Panc1 (cell line): ENCODE measurements at regions of chr9 and their contacts with region 1.

Region 1: GRCh38 chr9:26597542-26598149 is 295.0 kb downstream of the CAAP1 start:
- DNase-seq: no peak
- ATAC-seq: no peak
- H3K4me3 ChIP-seq: no peak overlapping the region
- H3K27ac ChIP-seq: no peak overlapping the region
- H3K4me1 ChIP-seq: no peaks in the 10 kb centered on the region
- H3K27me3 ChIP-seq: no peaks in the 10 kb centered on the region
- CTCF ChIP-seq: no peak

Region 2: DNA sequence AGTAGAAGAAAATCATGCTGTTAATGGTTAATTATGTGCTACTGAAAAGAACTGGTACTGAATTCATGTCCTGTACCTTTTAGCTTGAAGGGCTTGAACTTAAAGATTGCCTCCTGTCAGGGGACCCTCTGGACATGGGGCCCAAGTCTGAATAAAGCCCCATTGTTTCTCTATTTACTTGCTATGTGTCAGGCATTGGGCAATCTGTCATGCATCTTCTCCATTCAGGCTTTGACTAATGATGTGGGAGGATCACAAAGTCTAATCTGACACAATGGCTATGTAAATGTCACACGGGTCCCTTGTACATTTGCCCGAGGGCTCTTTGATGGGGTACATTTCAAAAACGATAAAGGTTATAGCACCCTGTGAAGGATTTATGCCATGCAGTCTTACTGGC is 855.4 kb before region 1 on chr9:
- CTCF ChIA-PET with region 1: interaction called, 13 read pairs
- POLR2A ChIA-PET with region 1: no interaction called
- in situ Hi-C with region 1: no loop called
- intact Hi-C with region 1: no loop called
- DNase-seq: no peak
- ATAC-seq: no peak
- H3K4me3 ChIP-seq: no peak overlapping the region
- H3K27ac ChIP-seq: no peak overlapping the region
- H3K4me1 ChIP-seq: no peaks in the 10 kb centered on the region
- H3K27me3 ChIP-seq: no peaks in the 10 kb centered on the region
- CTCF ChIP-seq: no peak

Region 3: GRCh38 chr9:26789959-26790358 is 192.3 kb after region 1 on chr9:
- CTCF ChIA-PET with region 1: no interaction called
- POLR2A ChIA-PET with region 1: no interaction called
- in situ Hi-C with region 1: no loop called
- intact Hi-C with region 1: no loop called
- DNase-seq: no peak
- ATAC-seq: no peak
- H3K4me3 ChIP-seq: no peak overlapping the region
- H3K27ac ChIP-seq: no peak overlapping the region
- H3K4me1 ChIP-seq: no peaks in the 10 kb centered on the region
- H3K27me3 ChIP-seq: no peaks in the 10 kb centered on the region
- CTCF ChIP-seq: no peak